ENCODE measurements at regions of chr22 and their contacts with region 1.

Region 1: DNA sequence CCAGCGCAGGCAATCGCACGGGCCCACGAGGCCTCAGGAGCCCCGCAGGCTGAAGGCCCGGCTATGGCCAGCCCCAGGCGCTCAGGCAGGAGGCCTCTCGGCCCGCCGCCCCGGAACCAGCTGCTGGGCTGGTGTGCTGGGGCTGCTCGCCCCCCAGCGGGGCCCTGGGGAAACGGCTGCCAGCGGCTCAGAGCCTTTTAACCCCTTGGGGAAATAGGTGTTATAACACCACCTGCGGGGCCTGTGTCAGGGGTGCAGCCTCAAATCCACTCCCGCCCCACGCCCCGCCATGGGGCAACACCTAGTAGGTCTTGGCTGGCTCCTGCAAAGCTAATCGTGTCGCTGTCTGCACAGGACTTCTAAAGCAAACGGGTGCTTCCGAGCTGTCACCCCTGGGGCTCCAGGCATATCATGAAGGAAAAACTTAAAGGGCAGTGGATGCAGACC is 237.4 kb downstream of the TTC28 start:
- DNase-seq: peak; percentile 82 to 90
- H3K4me3 ChIP-seq: peak overlapping the region; percentile 56
- H3K4me3 Mint-ChIP-seq: peak overlapping the region; percentile 85
- H3K27ac Mint-ChIP-seq: peak overlapping the region; percentile 86
- H3K4me1 ChIP-seq: no peaks in the 10 kb centered on the region
- H3K4me1 Mint-ChIP-seq: no peaks in the 10 kb centered on the region
- H3K27me3 ChIP-seq: no peaks in the 10 kb centered on the region
- H3K27me3 Mint-ChIP-seq: peaks cover 6% of the 10 kb centered on the region
- CTCF ChIP-seq: peak; percentile 86 to 94

Region 2: DNA sequence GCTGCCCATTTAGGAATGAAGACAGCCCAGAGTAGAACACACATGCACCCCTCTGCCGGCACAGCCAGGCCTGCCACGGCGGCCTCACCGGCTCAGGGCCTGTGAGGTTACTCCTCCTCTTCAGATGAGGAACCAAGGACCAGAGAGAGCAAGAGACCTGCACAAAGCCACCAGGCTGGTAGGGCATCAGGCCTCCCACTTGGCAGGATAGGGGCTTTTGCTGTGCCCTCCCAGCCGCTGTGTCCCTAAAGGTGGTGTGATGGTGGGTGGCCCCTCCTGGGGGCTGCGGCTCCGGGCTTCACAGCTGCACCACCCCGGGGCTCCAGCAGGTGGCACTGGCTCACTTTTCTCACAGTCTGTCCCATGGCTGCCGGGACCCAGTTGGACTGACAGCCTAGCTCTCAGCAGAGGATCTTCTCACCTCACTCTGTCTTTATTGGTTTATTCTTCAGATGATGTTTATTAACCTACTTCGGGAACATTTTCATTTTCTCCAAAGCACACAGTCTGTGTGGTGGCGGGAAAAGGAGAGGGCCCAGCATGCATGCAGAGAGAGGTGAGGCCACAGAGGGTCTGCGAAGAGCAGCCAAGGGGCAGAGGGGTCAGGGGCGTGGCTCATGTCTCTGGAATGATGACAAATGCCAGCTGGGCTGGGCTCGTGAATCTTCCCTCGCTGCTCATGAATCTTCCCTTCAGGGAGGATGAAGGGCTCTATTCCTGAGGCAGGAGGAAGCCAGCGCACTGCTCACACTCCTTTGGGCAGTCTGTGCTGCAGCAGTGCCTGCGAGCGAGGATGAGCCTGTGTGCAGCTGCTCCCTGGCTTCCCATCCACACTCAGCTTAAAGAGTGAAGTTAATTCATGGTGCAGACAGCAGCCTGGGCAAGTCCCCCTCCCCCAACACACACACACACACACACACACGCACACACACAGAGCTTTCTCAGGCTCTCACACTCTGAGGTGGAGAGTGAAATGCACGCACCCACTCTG is 422.1 kb before region 1 on chr22:
- CTCF ChIA-PET with region 1: interaction called, 6 read pairs
- POLR2A ChIA-PET with region 1: no interaction called
- intact Hi-C with region 1: loop called (anchors 1 kb)
- DNase-seq: peak; percentile 71 to 82
- H3K4me3 ChIP-seq: no peak overlapping the region
- H3K4me3 Mint-ChIP-seq: no peak overlapping the region
- H3K27ac Mint-ChIP-seq: no peak overlapping the region
- H3K4me1 ChIP-seq: peaks cover 7% of the 10 kb centered on the region; the same call in 1 of the 2 replicates
- H3K4me1 Mint-ChIP-seq: no peaks in the 10 kb centered on the region
- H3K27me3 ChIP-seq: no peaks in the 10 kb centered on the region
- H3K27me3 Mint-ChIP-seq: no peaks in the 10 kb centered on the region
- CTCF ChIP-seq: peak; percentile 91 to 93

Region 3: DNA sequence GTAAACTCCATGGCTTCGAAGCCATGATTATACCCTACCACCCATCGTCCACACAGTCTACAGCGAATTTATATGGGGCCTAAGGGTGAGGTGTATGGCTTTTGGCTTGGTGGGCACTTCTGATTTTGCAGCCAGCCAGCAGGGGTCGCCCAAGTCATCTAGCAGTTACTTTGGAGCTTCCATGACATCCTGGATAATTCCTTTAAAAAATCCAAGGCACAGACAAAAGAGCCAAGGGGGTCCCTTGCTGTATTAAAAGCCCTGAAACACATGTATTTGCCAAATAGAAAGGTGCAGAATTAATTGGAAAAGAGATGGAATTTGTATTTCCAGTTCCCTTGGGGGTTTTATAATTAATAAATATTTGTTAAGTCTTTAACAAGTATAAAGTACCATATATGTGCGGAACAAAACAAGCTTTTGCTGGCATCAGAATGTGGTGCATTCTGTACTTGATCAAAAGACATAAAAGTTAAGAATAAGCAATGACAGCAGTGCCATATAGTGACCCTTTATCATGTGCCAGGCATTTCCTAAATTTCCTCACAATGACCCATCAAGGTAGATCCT is 390.4 kb before region 1 on chr22:
- CTCF ChIA-PET with region 1: interaction called, 10 read pairs
- POLR2A ChIA-PET with region 1: no interaction called
- intact Hi-C with region 1: loop called (anchors 1 kb)
- DNase-seq: peak; percentile 69 to 77
- H3K4me3 ChIP-seq: no peak overlapping the region
- H3K4me3 Mint-ChIP-seq: no peak overlapping the region
- H3K27ac Mint-ChIP-seq: no peak overlapping the region
- H3K4me1 ChIP-seq: no peaks in the 10 kb centered on the region
- H3K4me1 Mint-ChIP-seq: no peaks in the 10 kb centered on the region
- H3K27me3 ChIP-seq: no peaks in the 10 kb centered on the region
- H3K27me3 Mint-ChIP-seq: peaks cover 3% of the 10 kb centered on the region
- CTCF ChIP-seq: peak; percentile 75 to 89

Region 4: DNA sequence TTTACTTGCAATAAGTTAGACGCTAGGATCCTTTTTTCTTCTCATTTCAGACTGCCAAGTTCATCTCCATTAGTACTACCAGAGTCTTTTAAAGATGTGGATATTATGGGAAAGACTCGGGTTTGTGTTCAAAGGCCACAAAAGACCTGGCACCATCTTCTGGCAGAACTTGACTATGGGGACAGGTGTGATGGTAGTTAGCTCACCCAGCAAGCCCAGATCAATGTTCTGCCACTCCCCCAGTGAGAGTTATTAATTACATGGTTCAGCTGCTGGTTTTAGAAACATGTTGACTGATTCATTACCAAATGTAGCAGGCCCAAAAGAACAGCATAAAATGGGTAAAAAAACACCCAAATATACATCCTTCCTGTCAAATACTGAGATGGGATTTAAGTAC is 189.7 kb before region 1 on chr22:
- CTCF ChIA-PET with region 1: interaction called, 3 read pairs
- POLR2A ChIA-PET with region 1: no interaction called
- intact Hi-C with region 1: loop called (anchors 5 kb)
- DNase-seq: no peak
- H3K4me3 ChIP-seq: no peak overlapping the region
- H3K4me3 Mint-ChIP-seq: no peak overlapping the region
- H3K27ac Mint-ChIP-seq: no peak overlapping the region
- H3K4me1 ChIP-seq: no peaks in the 10 kb centered on the region
- H3K4me1 Mint-ChIP-seq: no peaks in the 10 kb centered on the region
- H3K27me3 ChIP-seq: no peaks in the 10 kb centered on the region
- H3K27me3 Mint-ChIP-seq: no peaks in the 10 kb centered on the region
- CTCF ChIP-seq: no peak

Region 5: GRCh38 chr22:28395920-28396753 is 46.1 kb before region 1 on chr22:
- CTCF ChIA-PET with region 1: no interaction called
- POLR2A ChIA-PET with region 1: no interaction called
- intact Hi-C with region 1: no loop called
- DNase-seq: no peak
- H3K4me3 ChIP-seq: no peak overlapping the region
- H3K4me3 Mint-ChIP-seq: no peak overlapping the region
- H3K27ac Mint-ChIP-seq: no peak overlapping the region
- H3K4me1 ChIP-seq: peaks cover 8% of the 10 kb centered on the region; the same call in 1 of the 2 replicates
- H3K4me1 Mint-ChIP-seq: peaks cover 12% of the 10 kb centered on the region
- H3K27me3 ChIP-seq: no peaks in the 10 kb centered on the region
- H3K27me3 Mint-ChIP-seq: peaks cover 3% of the 10 kb centered on the region
- CTCF ChIP-seq: no peak

Measured in Caco-2 (cell line).